Dorsolateral prefrontal cortex (tissue), 120 donors: ENCODE measurements at regions of chr7 and their contacts with region 1.

Region 1: DNA sequence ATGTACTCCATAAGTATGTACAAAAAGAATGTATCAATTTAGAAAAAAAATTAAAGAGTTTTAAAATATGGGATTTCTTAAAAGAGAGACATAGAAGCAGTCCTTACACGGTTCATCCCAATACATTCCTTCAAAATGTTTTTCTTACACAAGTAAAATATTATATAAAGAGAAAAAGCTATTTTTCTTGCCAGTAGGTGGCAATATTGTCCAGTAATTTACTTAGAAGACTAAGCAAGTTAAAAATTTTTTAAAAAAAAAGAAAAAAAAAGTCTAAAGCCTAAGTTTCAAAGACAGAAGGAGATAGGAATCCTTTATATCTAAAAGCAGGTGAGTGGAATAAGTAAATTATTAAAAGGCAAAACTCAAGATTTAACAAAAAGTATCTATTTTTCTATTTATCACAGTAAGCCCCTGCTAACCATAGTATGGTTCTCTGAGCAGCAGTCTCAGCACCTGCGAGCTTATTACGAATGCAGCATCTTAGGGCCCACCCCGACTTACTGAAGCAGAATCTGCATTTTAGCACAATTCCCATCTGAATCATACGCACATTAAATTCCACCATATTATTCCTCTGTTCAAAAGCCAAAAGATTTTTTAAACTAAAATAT is 240.6 kb downstream of the DGKI start:
- DNase-seq: no peak
- H3K4me3 ChIP-seq: no peak overlapping the region
- H3K27ac ChIP-seq: no peak overlapping the region
- H3K27me3 ChIP-seq: no peaks in the 10 kb centered on the region
- CTCF ChIP-seq: peak; percentile 54 to 87 (median 74)

Region 2: DNA sequence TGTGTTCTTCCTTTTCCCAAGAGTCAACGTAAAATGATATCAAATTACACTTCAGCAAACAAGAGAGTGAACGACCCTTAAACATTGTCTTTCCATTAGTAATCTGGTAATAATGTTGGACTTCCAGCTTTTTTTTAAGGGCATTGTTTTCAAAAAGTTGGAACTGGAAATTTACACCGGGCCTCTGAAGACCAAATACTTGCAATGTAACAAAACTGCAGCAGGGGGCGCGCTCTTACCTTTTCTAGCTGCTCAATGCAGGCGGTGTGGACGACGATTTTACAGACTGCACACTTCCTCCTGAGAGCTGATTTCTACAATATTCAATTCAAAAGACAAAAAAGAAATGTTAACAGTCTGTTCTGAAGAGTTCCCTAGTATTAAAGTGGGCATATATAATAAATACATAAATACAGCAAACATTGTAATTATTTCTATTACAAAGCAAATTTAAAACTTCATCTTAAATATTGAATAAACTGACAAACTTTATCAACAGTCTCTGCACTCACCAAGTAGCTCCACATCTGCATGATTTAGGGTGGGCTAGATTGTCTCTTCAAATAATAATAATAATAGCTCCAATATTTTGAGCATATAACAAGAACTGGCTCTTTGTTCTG is 50.2 kb after region 1 on chr7:
- intact Hi-C with region 1: no loop called
- DNase-seq: peak; percentile 64 to 90 (median 76)
- H3K4me3 ChIP-seq: no peak overlapping the region
- H3K27ac ChIP-seq: peak overlapping the region in 1 of 59 donors; percentile 11
- H3K27me3 ChIP-seq: no peaks in the 10 kb centered on the region
- CTCF ChIP-seq: peak; percentile 66 to 95 (median 88)

Region 3: GRCh38 chr7:138002096-138002827 is 396.1 kb after region 1 on chr7:
- intact Hi-C with region 1: loop called (anchors 5 to 10 kb)
- DNase-seq: peak; percentile 98 to 100 (median 99)
- H3K4me3 ChIP-seq: peak overlapping the region; percentile 62 to 99 (median 89)
- H3K27ac ChIP-seq: peak overlapping the region in 58 of 59 donors; percentile 27 to 98 (median 92)
- H3K27me3 ChIP-seq: no peaks in the 10 kb centered on the region
- CTCF ChIP-seq: peak; percentile 84 to 100 (median 95)